Activated CD8-positive, alpha-beta T cell treated with anti-CD3 and anti-CD28 coated beads for 36 hours (primary cell): ENCODE measurements at regions of chr6 and their contacts with region 1.

Region 1: GRCh38 chr6:70107852-70108629 is 194.8 kb downstream of the COL9A1 start:
- DNase-seq: no peak
- ATAC-seq: no peak
- H3K4me3 Mint-ChIP-seq: no peak overlapping the region
- H3K27ac Mint-ChIP-seq: no peak overlapping the region
- H3K4me1 Mint-ChIP-seq: no peaks in the 10 kb centered on the region
- H3K27me3 Mint-ChIP-seq: peaks cover 8% of the 10 kb centered on the region
- CTCF ChIP-seq: peak; percentile 75

Region 2: DNA sequence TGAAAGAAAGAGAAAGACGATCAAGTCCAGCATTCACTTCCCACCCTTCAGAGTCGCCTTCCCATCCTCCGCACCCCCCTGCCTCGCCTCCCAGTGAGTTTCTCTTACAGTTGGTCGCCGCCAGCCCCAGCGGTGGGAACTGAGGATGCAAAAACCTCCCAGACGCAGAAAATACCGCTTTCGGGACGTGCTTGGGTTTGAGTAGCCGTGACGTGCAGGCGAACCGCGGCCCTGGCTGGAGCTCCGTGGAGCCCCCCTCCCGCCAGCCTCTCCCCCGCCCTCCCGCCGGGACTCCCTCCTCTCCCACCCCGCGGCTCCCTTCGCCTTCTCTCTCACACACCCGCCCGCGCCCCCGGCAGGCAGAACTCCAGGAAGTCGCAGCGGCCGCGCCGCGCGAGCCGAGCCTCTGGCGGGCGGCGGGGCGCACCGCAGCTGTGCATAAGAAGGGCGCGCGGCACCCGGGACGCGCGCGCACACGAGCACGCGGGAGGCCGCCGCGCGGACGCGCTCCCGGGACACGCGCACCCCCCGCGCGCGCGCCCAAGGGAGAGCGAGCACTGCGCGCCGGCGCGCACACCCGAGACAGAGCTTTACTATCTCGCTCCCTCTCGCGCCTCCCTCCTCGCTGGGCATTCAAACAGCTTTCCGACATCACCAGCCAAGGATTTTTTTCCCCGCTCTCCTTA is 1473.2 kb before region 1 on chr6 and contains the start of gene ADGRB3:
- CTCF ChIA-PET with region 1: no interaction called
- POLR2A ChIA-PET with region 1: no interaction called
- intact Hi-C with region 1: loop called (anchors 10 kb)
- DNase-seq: peak; percentile 36
- ATAC-seq: peak; percentile 78
- H3K4me3 Mint-ChIP-seq: peak within 1 kb of the TSS; percentile 62
- H3K27ac Mint-ChIP-seq: no peak within 1 kb of the TSS
- H3K4me1 Mint-ChIP-seq: peaks cover 13% of the 10 kb centered on the region
- H3K27me3 Mint-ChIP-seq: peaks cover 50% of the 10 kb centered on the region
- CTCF ChIP-seq: no peak
- total RNA-seq, gene ADGRB3: not detected

Region 3: DNA sequence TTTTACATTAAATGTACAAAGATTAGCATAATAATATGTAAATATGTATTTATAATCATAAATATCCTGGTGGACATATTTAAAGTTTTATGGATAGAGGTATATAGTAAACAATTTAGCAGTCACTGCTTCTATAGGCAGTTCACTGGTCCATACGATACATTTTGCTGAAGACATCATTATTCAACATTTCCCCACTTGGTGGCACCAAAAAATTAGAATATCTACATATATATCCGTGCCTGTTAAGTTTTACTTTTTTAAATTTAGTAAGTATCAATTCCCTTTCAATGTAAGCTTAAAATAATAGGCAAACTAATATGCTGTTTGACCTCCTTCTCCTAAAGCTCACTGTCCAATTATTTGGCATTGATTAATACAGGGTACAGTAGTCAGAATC is 375.4 kb before region 1 on chr6:
- CTCF ChIA-PET with region 1: no interaction called
- POLR2A ChIA-PET with region 1: no interaction called
- intact Hi-C with region 1: loop called (anchors 10 kb)
- DNase-seq: no peak
- ATAC-seq: no peak
- H3K4me3 Mint-ChIP-seq: no peak overlapping the region
- H3K27ac Mint-ChIP-seq: no peak overlapping the region
- H3K4me1 Mint-ChIP-seq: no peaks in the 10 kb centered on the region
- H3K27me3 Mint-ChIP-seq: no peaks in the 10 kb centered on the region
- CTCF ChIP-seq: no peak

Region 4: GRCh38 chr6:69852706-69853105 is 255.3 kb before region 1 on chr6:
- CTCF ChIA-PET with region 1: no interaction called
- POLR2A ChIA-PET with region 1: no interaction called
- intact Hi-C with region 1: loop called (anchors 10 kb)
- DNase-seq: no peak
- ATAC-seq: no peak
- H3K4me3 Mint-ChIP-seq: no peak overlapping the region
- H3K27ac Mint-ChIP-seq: no peak overlapping the region
- H3K4me1 Mint-ChIP-seq: no peaks in the 10 kb centered on the region
- H3K27me3 Mint-ChIP-seq: peaks cover 11% of the 10 kb centered on the region
- CTCF ChIP-seq: no peak

Region 5: DNA sequence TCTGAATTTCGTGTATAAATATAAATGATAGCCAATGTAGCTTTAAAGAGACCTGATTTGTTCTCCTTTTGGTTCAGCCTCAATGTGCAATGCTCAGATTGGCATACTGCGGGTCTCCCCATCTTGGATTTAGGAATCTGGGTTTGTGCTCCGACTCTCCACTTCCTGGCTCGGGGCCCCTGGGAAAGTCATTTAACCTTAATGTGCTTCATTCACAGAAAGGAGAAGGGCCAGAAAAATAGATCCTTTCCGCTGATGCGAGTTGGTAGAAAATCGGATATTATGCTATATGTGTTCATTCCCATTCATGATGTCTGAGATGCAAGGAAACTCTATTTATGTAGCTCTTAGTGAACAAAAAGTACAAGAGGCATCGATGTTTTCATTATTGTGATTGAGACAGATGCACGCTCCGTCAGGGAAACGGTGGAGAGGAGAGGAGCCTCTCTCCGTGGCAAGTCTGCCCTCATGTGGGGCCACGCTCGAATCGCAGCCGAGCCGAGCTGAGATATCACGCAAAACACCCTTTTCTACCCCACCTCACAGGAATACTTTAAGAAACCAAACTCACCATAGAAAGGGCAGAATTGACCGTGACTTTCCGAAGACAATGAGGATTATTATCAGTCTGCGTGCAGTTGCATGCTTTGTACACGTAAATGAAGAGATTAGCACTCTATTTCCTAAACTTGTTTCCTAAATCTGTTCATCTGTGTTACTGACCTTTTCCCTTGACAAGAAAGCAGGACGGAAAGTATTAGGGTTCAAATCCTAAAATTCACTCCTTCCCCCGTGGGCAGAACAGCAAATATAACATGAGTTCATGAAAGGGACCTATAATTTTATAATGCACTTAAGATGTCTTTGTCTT is 58.3 kb after region 1 on chr6:
- CTCF ChIA-PET with region 1: interaction called, 10 read pairs
- POLR2A ChIA-PET with region 1: no interaction called
- intact Hi-C with region 1: no loop called
- DNase-seq: peak; percentile 46
- ATAC-seq: peak; percentile 55
- H3K4me3 Mint-ChIP-seq: no peak overlapping the region
- H3K27ac Mint-ChIP-seq: no peak overlapping the region
- H3K4me1 Mint-ChIP-seq: no peaks in the 10 kb centered on the region
- H3K27me3 Mint-ChIP-seq: peaks cover 27% of the 10 kb centered on the region
- CTCF ChIP-seq: peak; percentile 60